ENCODE measurements at regions of chr1 and their contacts with region 1.

Region 1: DNA sequence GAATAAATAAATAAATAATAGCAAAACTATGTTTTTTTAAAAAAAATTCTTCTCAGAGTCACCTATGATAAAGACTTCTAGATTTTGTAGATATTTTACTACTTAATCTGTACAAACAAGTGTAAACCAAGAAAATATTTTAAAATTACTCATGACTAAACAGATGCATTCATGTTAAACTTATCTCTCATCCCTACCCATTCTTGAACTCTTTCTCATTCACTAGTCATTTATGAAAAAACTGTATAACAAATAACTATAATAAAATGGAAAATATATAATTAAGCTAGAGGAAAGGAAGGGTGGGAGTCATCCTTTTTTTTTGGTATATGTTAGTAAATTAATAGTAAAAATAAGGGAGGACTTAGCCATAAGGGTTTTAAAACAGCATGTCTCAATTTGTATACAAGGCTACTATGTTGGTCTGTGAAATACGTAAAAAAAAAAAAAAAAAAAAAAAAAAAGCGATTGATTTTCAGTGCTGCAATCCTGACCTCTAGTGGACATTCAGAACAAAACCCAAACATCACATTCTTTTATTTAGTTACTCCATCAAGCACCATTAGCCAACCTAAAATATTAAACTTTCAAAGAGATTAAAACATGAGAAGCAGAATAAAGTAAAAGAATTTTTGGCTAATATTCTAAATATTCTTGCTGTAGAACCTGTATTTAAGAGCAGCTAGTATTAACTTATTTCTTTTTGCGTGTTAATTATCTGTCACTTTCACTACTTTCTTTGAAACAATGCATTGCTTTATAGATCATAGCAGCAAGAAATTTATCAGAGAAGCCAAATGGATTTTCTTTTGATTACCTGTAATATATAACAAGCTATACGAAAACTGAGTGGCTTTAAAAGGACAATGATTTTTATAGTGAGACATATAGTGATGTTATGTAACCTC is 255.8 kb upstream of the CACYBP start:
- DNase-seq: peak in 2 of 5 donors; percentile 25 to 37
- H3K4me3 ChIP-seq: no peak overlapping the region
- H3K4me3 Mint-ChIP-seq: no peak overlapping the region
- H3K27ac ChIP-seq: no peak overlapping the region
- H3K27ac Mint-ChIP-seq: no peak overlapping the region
- H3K4me1 ChIP-seq: no peaks in the 10 kb centered on the region
- H3K4me1 Mint-ChIP-seq: peaks cover 0 to 9% (median 9%) of the 10 kb centered on the region in 3 donors
- H3K27me3 ChIP-seq: no peaks in the 10 kb centered on the region
- H3K27me3 Mint-ChIP-seq: no peaks in the 10 kb centered on the region

Region 2: GRCh38 chr1:174262349-174263241 is 481.3 kb before region 1 on chr1:
- CTCF ChIA-PET with region 1: interaction called, 12 read pairs
- POLR2A ChIA-PET with region 1: no interaction called
- DNase-seq: peak in 2 of 5 donors; percentile 2 to 7
- H3K4me3 ChIP-seq: no peak overlapping the region
- H3K4me3 Mint-ChIP-seq: no peak overlapping the region
- H3K27ac ChIP-seq: no peak overlapping the region
- H3K27ac Mint-ChIP-seq: peak overlapping the region in 2 of 8 donors; percentile 57 to 58
- H3K4me1 ChIP-seq: no peaks in the 10 kb centered on the region
- H3K4me1 Mint-ChIP-seq: no peaks in the 10 kb centered on the region
- H3K27me3 ChIP-seq: no peaks in the 10 kb centered on the region
- H3K27me3 Mint-ChIP-seq: no peaks in the 10 kb centered on the region

Region 3: DNA sequence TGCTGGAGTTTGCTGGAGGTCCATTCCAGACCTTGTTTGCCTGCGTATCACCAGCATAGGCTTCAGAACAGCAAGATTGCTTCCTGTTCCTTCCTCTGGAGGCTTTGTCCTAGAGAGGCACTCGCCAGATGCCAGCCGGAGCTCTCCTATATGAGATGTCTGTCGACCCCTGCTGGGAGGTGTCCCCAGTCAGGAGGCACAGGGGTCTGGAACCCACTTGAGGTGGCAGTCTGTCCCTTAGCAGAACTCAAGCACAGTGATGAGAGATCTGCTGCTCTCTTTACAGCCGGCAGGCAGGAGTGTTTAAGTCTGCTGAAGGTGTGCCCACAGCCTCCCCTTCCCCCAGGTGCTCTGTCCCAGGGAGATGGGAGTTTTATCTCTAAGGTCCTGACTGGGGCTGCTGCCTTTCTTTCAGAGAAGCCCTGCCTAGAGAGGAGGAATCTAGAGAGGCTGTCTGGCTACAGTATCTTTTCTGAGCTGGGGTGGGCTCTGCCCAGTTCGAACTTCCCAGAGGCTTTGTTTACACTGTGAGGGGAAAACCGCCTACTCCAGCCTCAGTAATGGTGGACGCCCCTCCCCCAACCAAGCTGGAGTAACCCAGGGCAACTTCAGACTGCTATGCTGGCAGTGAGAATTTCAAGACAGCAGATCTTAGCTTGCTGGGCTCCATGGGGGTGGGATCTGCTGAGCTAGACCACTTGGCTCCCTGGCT is 91.2 kb before region 1 on chr1:
- CTCF ChIA-PET with region 1: no interaction called
- POLR2A ChIA-PET with region 1: no interaction called
- DNase-seq: no peak
- H3K4me3 ChIP-seq: no peak overlapping the region
- H3K4me3 Mint-ChIP-seq: no peak overlapping the region
- H3K27ac ChIP-seq: no peak overlapping the region
- H3K27ac Mint-ChIP-seq: no peak overlapping the region
- H3K4me1 ChIP-seq: no peaks in the 10 kb centered on the region
- H3K4me1 Mint-ChIP-seq: peaks cover 10 to 27% (median 13%) of the 10 kb centered on the region in 3 donors
- H3K27me3 ChIP-seq: no peaks in the 10 kb centered on the region
- H3K27me3 Mint-ChIP-seq: no peaks in the 10 kb centered on the region

Measured in CD8-positive, alpha-beta memory T cell (primary cell).